ENCODE measurements at regions of chr9 and their contacts with region 1.

Region 1: GRCh38 chr9:14294659-14295058 is 19.3 kb downstream of the NFIB start:
- DNase-seq: no peak
- ATAC-seq: no peak
- H3K4me3 ChIP-seq: no peak overlapping the region
- H3K4me3 Mint-ChIP-seq: no peak overlapping the region
- H3K27ac ChIP-seq: no peak overlapping the region
- H3K27ac Mint-ChIP-seq: no peak overlapping the region
- H3K4me1 ChIP-seq: no peaks in the 10 kb centered on the region
- H3K4me1 Mint-ChIP-seq: no peaks in the 10 kb centered on the region
- H3K27me3 ChIP-seq: peaks cover 0 to 3% of the 10 kb centered on the region in 2 experiments
- H3K27me3 Mint-ChIP-seq: peaks cover 3% of the 10 kb centered on the region
- CTCF ChIP-seq: no peak

Region 2: GRCh38 chr9:14273696-14274121 is 20.9 kb before region 1 on chr9:
- CTCF ChIA-PET with region 1: no interaction called
- POLR2A ChIA-PET with region 1: no interaction called
- intact Hi-C with region 1: loop called in 1 of 2 experiments (anchors 2 kb)
- DNase-seq: no peak
- ATAC-seq: no peak
- H3K4me3 ChIP-seq: no peak overlapping the region
- H3K4me3 Mint-ChIP-seq: no peak overlapping the region
- H3K27ac ChIP-seq: no peak overlapping the region
- H3K27ac Mint-ChIP-seq: no peak overlapping the region
- H3K4me1 ChIP-seq: no peaks in the 10 kb centered on the region
- H3K4me1 Mint-ChIP-seq: peaks cover 2% of the 10 kb centered on the region
- H3K27me3 ChIP-seq: no peaks in the 10 kb centered on the region
- H3K27me3 Mint-ChIP-seq: peaks cover 21% of the 10 kb centered on the region
- CTCF ChIP-seq: no peak

Region 3: DNA sequence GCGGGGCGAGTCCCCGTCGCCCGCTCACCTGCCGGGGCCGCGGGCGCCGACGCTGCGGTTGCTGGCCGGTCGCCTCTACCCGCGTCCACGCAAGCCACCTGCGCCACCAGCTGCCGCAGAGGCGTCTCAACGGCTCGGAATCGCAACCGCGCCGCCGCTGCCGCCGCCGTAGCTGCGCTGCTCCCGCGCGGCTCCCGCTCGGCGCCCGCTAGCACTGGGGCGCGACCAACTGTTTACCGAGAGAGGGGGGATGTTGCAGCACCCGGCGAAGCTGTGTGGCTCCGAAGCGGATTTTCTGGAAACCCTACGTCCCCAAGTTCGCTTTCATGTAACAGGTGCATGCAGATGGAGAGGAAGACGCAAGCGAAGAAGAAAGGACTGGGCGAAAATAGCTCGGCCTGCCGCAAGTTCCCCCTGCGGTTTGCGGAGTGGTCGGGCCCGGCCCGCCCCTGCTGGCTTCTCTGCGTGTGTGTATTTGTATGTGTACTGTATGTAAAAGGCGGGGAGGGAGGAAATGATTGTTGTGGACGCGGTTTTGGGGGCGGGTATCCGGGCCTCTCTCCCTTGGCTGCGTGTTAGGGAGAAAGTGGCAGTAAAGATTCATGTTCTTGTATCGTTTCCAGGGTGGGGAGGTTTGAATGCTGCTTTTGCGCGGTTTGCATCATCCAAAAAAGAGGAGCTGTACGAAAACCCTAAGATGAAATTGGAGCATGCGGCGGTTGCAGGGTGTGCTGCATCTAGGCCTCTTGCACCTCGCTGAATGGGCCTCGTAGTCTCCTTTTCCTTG is 1216.3 kb after region 1 on chr9 and contains the start of gene PSIP1:
- CTCF ChIA-PET with region 1: no interaction called
- POLR2A ChIA-PET with region 1: no interaction called
- intact Hi-C with region 1: no loop called
- DNase-seq: peak; percentile 77 to 93 (median 85)
- ATAC-seq: peak; percentile 83
- H3K4me3 ChIP-seq: peak within 1 kb of the TSS; percentile 87 to 93
- H3K4me3 Mint-ChIP-seq: peak within 1 kb of the TSS; percentile 89
- H3K27ac ChIP-seq: peak within 1 kb of the TSS; percentile 91 to 98
- H3K27ac Mint-ChIP-seq: peak within 1 kb of the TSS; percentile 100
- H3K4me1 ChIP-seq: peaks cover 46% of the 10 kb centered on the region
- H3K4me1 Mint-ChIP-seq: peaks cover 51% of the 10 kb centered on the region
- H3K27me3 ChIP-seq: no peaks in the 10 kb centered on the region
- H3K27me3 Mint-ChIP-seq: no peaks in the 10 kb centered on the region
- CTCF ChIP-seq: no peak
- total RNA-seq, gene PSIP1: 93.5 to 96.0 TPM

Measured in CD8-positive, alpha-beta T cell (primary cell).